Left lung (tissue), 14 donors: ENCODE measurements at regions of chr6 and their contacts with region 1.

Region 1: GRCh38 chr6:107989166-107990094 is 31.4 kb upstream of the SEC63 start:
- DNase-seq: no peak
- ATAC-seq: no peak
- H3K4me3 ChIP-seq: no peak overlapping the region
- H3K27ac ChIP-seq: no peak overlapping the region
- H3K4me1 ChIP-seq: no peaks in the 10 kb centered on the region
- H3K27me3 ChIP-seq: no peaks in the 10 kb centered on the region
- CTCF ChIP-seq: no peak

Region 2: GRCh38 chr6:107931894-107932293 is 57.5 kb before region 1 on chr6:
- intact Hi-C with region 1: no loop called
- DNase-seq: no peak
- ATAC-seq: no peak
- H3K4me3 ChIP-seq: no peak overlapping the region
- H3K27ac ChIP-seq: no peak overlapping the region
- H3K4me1 ChIP-seq: no peaks in the 10 kb centered on the region
- H3K27me3 ChIP-seq: no peaks in the 10 kb centered on the region
- CTCF ChIP-seq: no peak

Region 3: DNA sequence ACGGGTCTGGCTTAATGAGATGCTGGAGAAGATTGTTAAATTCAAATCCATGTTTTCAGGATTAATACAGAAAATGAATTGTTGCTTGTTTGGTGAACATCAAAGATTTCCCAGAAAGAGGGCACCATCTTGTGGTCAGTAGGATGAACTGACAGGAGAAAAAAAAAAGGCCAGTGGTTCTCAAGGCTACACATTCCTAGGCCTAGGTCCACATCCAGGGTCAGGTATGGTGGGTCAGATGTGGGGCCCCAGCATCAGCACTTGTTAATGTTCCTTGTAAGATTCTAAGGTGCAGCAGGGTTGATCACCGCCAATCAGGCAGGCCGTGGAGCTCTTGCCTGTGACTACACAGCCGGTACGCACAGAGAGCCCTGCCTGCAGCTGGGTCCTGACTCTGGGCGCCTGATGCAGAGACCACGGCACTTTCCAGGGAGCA is 537.3 kb after region 1 on chr6:
- intact Hi-C with region 1: loop called in 1 of 2 experiments (anchors 10 kb)
- DNase-seq: peak in 2 of 4 donors; percentile 34 to 55
- ATAC-seq: peak; percentile 86
- H3K4me3 ChIP-seq: no peak overlapping the region
- H3K27ac ChIP-seq: no peak overlapping the region
- H3K4me1 ChIP-seq: no peaks in the 10 kb centered on the region
- H3K27me3 ChIP-seq: no peaks in the 10 kb centered on the region
- CTCF ChIP-seq: peak; percentile 60 to 66